ENCODE measurements at regions of chr20 and their contacts with region 1.

Region 1: DNA sequence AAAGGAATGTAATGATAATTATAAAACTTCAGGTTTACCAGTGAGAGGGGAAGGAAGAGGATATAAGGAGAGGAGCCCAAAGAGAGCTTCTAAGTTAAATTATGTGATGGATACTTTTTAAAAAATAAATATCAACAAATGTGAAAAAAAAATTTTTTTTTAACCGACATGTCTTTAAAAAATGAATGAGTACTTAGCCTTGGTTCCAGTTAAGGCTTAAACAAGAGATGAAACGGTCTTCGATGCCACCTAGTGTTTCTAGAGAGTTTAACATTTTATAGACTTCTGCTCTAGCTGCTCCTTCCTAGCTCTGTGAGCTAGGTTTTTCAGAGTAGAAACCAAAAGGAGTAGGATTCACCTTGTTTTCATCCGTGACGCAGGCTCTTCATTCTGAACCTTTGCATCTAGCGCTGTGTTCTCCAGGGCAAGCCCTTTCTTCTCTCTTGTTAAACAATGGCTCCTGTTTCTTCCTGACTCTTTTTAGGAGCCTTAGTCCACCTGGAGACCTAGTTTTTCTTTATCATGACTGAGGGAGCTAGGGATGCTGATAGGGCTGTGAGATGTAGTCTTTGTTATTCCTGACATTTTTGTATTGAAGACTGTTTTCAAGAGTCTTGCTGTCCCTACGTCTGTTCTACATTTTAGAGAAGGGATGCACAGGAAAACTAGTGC is 42.4 kb upstream of the GNRH2 start:
- H3K4me3 ChIP-seq: no peak overlapping the region
- H3K27ac ChIP-seq: no peak overlapping the region
- H3K4me1 ChIP-seq: no peaks in the 10 kb centered on the region; the same call in 1 of the 2 replicates
- CTCF ChIP-seq: peak; percentile 38; the same call in 1 of the 2 replicates

Region 2: GRCh38 chr20:2752567-2753460 is 248.2 kb before region 1 on chr20:
- CTCF ChIA-PET with region 1: interaction called, 24 read pairs
- POLR2A ChIA-PET with region 1: no interaction called
- H3K4me3 ChIP-seq: peak overlapping the region; percentile 34
- H3K27ac ChIP-seq: peak overlapping the region; percentile 70; the same call in 1 of the 2 replicates
- H3K4me1 ChIP-seq: peaks cover 3% of the 10 kb centered on the region
- CTCF ChIP-seq: peak; percentile 88

Region 3: DNA sequence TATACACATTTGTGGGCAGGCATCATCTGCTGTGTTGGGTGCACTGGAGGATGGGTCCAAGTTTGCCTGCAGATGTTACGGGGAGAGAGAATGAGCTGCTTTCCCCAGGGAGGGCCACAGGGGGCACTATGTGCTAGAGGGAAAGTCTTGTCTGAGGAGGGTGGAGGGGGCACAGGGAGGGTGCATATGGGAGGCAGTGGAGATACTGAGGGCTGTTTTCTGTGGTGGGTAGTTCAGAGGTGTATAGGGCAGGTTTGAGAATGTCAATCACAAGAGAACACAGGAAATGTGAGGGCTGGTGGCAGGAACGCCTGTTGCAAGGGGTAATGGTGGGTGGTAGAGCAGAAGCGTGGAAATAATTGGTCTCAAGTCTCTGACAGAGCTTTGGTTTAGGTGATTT is 135.4 kb before region 1 on chr20:
- CTCF ChIA-PET with region 1: interaction called, 22 read pairs
- POLR2A ChIA-PET with region 1: no interaction called
- H3K4me3 ChIP-seq: no peak overlapping the region
- H3K27ac ChIP-seq: no peak overlapping the region
- H3K4me1 ChIP-seq: peaks cover 4% of the 10 kb centered on the region
- CTCF ChIP-seq: 0 out of 2 replicates have a peak, but pooled peaks have one; percentile 32

Region 4: GRCh38 chr20:2871661-2872458 is 129.1 kb before region 1 on chr20:
- CTCF ChIA-PET with region 1: interaction called, 22 read pairs
- POLR2A ChIA-PET with region 1: interaction called, 4 read pairs
- H3K4me3 ChIP-seq: peak overlapping the region; percentile 44; the same call in 1 of the 2 replicates
- H3K27ac ChIP-seq: no peak overlapping the region; the same call in 1 of the 2 replicates
- H3K4me1 ChIP-seq: peaks cover 15% of the 10 kb centered on the region
- CTCF ChIP-seq: no peak

Region 5: GRCh38 chr20:2883726-2884637 is 117.0 kb before region 1 on chr20:
- CTCF ChIA-PET with region 1: no interaction called
- POLR2A ChIA-PET with region 1: no interaction called
- H3K4me3 ChIP-seq: no peak overlapping the region
- H3K27ac ChIP-seq: no peak overlapping the region
- H3K4me1 ChIP-seq: peaks cover 16% of the 10 kb centered on the region
- CTCF ChIP-seq: no peak

Region 6: GRCh38 chr20:2914160-2914559 is 86.8 kb before region 1 on chr20:
- CTCF ChIA-PET with region 1: interaction called, 14 read pairs
- POLR2A ChIA-PET with region 1: no interaction called
- H3K4me3 ChIP-seq: no peak overlapping the region
- H3K27ac ChIP-seq: no peak overlapping the region
- H3K4me1 ChIP-seq: no peaks in the 10 kb centered on the region; the same call in 1 of the 2 replicates
- CTCF ChIP-seq: peak; percentile 46; the same call in 1 of the 2 replicates

Region 7: GRCh38 chr20:3014662-3015061 is 13.7 kb after region 1 on chr20:
- CTCF ChIA-PET with region 1: interaction called, 10 read pairs
- POLR2A ChIA-PET with region 1: no interaction called
- H3K4me3 ChIP-seq: no peak overlapping the region
- H3K27ac ChIP-seq: no peak overlapping the region
- H3K4me1 ChIP-seq: no peaks in the 10 kb centered on the region
- CTCF ChIP-seq: no peak

Region 8: DNA sequence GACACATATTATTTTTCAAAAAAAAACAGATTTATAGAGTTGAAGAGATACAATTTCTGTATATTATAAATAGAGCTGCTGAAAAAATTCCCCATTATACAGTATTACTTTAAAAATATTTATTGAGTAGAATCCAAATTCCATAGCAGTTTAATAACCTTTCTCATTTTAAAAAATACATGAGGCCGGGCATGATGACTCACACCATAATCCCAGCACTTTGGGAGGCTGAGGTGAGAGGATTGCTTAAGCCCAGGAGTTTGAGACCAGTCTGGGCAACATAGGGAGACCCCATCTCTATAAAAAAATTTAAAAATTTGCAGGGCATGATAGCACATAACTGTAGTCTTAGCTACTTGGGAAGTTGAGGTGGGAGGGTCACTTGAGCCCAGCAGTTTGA is 482.8 kb after region 1 on chr20:
- CTCF ChIA-PET with region 1: no interaction called
- POLR2A ChIA-PET with region 1: no interaction called
- H3K4me3 ChIP-seq: no peak overlapping the region
- H3K27ac ChIP-seq: no peak overlapping the region
- H3K4me1 ChIP-seq: peaks cover 15% of the 10 kb centered on the region; the same call in 1 of the 2 replicates
- CTCF ChIP-seq: no peak